AG04449 (cell line): ENCODE measurements at regions of chr19 and their contacts with region 1.

Region 1: GRCh38 chr19:49224856-49225255 is 67.3 kb downstream of the TRPM4 start:
- DNase-seq: no peak
- H3K4me3 ChIP-seq: no peak overlapping the region
- CTCF ChIP-seq: peak; percentile 54

Region 2: DNA sequence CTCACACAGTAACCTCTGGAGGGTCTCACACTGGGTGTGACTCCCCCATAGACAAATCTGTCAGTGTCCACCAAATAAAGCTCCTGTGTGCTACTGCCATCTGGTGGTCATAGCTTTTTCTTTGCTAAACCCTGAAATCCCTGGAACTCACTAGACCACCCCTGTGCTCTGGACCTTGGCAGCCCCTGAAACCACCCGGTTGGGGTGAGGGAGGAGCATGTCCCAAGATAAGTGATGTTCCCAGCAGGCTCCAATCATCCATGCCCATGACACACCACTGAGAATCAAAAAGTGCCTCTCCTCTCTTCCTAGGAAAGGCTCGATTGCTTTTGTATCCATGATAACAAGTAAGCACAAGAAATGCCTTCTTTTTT is 382.1 kb before region 1 on chr19:
- CTCF ChIA-PET with region 1: no interaction called
- POLR2A ChIA-PET with region 1: no interaction called
- DNase-seq: no peak
- H3K4me3 ChIP-seq: no peak overlapping the region
- CTCF ChIP-seq: peak; percentile 50

Region 3: DNA sequence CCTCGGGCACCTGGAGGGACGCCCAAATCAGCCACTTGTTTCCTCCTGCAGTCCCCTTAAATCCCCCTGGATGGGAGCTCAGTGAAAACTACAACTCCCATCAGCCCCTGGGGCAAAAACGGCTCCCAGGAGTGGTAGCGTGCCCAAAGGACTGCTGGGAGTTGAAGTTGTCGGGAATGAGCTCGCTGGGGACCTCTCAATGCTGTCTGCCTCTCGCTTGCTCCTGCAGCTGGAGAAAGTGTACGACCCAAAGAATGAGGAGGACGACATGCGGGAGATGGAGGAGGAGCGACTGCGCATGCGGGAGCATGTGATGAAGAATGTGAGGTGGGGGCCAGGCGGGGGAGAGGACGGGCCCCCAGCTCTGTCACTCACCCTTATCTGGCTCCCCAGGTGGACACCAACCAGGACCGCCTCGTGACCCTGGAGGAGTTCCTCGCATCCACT is 306.0 kb before region 1 on chr19:
- CTCF ChIA-PET with region 1: no interaction called
- POLR2A ChIA-PET with region 1: no interaction called
- DNase-seq: no peak
- H3K4me3 ChIP-seq: no peak overlapping the region
- CTCF ChIP-seq: no peak

Region 4: DNA sequence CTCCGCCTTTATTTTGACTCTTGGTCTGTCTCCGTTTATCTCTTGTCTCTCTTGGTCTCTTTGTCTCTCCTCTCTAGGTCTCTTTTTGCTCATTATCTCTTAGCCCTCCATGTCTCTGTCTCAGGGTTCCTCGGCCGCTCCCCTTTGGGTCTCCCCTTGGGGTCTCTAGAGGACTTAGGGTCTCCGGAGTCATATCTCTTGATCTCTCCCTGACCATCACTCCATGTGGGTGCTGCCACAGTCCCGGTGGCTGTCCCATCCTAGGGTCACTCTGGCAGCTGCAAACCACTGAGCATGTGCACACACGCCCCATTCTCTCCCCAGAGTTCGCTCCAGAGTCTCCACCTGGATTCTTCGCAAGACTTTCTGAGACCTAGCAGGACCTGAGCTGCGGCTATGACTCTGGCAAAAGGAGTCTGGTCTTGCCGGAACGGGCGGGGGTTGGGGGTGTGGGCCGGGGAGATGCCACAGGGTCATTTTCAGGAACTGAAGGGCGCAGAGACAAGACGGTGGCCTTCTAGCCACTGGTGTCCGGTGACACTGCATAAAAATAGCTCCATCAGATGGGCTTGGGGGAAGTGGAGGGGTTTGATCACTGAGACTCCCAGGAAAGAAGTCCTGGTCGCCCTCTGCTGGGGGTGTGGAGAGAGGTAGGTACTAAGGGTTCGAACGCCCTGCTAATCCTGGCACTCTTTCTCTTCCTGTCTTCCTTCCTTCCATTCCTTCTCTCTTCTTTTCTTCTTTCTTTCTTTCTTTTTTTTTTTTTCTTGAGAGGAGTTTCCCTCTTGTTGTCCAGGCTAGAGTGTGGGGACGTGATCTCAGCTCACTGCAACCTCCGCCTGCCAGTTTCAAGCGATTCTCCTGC is 151.1 kb before region 1 on chr19:
- CTCF ChIA-PET with region 1: interaction called, 18 read pairs
- POLR2A ChIA-PET with region 1: no interaction called
- DNase-seq: no peak
- H3K4me3 ChIP-seq: no peak overlapping the region
- CTCF ChIP-seq: peak; percentile 34

Region 5: DNA sequence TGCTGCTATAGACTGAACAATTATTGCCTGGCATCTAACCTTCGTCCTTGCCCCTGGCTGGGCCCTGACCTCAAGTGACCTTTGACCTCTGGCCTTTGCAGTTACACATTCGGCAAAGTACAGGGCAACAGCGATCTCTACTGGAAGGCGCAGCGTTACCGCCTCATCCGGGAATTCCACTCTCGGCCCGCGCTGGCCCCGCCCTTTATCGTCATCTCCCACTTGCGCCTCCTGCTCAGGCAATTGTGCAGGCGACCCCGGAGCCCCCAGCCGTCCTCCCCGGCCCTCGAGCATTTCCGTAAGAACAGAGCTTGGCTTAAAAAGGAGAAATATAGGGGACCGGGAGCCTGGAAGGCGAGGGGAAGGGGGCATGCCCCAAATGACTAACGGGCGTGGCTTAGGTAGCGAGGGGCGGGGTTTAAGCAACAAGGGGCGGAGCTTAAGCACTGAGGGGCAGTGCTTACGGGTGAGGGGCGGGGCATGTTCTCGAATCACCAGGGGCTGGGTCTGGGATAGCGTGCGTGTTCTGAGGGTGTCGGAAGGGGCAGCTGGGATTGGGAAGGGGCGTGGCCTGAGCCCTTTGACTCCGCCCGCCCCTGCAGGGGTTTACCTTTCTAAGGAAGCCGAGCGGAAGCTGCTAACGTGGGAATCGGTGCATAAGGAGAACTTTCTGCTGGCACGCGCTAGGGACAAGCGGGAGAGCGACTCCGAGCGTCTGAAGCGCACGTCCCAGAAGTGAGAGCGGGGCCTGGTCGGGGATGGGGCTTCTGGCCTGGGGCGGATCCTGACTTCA is 14.6 kb before region 1 on chr19:
- CTCF ChIA-PET with region 1: interaction called, 85 read pairs
- POLR2A ChIA-PET with region 1: no interaction called
- DNase-seq: no peak
- H3K4me3 ChIP-seq: no peak overlapping the region
- CTCF ChIP-seq: no peak

Region 6: DNA sequence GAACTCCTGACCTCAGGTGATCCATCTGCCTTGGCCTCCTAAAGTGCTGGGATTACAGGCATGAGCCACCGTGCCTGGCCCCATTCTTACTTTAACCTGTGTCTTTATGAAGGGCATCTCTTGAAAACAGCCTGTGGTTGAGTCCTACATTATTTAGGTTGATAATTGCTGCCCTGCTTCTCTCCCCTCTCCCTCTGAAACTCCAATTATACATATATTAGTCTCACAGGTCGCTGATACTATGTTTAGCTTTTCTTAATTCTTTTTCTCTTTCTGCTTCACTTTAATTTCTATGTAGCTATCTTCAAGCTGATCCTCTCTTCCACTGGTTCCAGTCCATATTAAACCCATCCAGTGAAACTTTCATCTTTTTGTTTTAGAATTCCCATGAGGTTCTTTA is 25.1 kb after region 1 on chr19:
- CTCF ChIA-PET with region 1: interaction called, 15 read pairs
- POLR2A ChIA-PET with region 1: no interaction called
- DNase-seq: no peak
- H3K4me3 ChIP-seq: no peak overlapping the region
- CTCF ChIP-seq: no peak

Region 7: GRCh38 chr19:49363268-49364082 is 138.6 kb after region 1 on chr19 and contains the start of gene DKKL1:
- CTCF ChIA-PET with region 1: no interaction called
- POLR2A ChIA-PET with region 1: no interaction called
- DNase-seq: peak; percentile 63
- H3K4me3 ChIP-seq: peak within 1 kb of the TSS; percentile 85
- CTCF ChIP-seq: peak; percentile 32

Region 8: GRCh38 chr19:49443366-49444099 is 218.7 kb after region 1 on chr19:
- CTCF ChIA-PET with region 1: interaction called, 17 read pairs
- POLR2A ChIA-PET with region 1: no interaction called
- DNase-seq: peak; percentile 50
- H3K4me3 ChIP-seq: peak overlapping the region; percentile 69
- CTCF ChIP-seq: peak; percentile 99